Naive thymus-derived CD4-positive, alpha-beta T cell (primary cell): ENCODE measurements at regions of chr2 and their contacts with region 1.

Region 1: DNA sequence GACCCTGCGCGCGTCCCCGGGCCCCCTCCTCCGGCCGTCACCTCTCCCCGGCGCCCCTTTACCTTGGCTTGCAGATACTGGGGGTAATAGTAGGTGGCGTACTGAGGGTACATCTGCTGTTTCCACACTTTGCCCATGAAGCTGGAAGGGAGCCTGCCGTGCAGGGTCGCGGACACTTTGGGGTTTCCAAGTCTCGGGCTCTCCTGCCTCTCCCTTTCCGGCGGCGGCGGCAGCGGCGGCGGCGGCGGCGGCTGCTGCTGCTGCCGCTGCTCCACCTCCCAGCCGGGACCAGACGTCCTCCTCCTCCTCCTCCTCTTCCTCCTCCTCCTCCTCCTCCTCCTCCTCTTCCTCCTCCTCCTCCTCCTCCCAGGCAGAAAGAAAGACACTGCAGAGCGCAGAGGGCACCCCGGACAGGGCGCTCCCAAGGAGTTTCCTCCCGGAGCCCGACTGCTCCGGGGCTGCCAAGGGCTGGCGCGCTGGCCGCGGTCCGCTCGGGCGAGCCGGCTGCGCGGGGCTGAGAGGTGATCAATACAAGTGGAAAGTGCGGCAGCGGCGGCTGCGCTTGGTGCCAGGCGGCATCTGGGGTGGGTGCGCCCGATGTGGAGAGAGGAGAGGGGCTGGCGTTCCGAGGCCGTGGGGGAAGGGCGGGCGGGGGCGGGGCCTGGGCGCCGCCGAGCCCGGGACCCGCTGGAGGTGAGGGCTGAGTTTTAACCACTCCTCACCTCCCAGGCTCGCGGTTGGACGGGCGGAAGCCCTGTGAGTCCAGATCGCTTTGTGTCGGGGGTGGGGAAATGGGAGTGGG is at the start of gene RBMS1:
- DNase-seq: peak; percentile 36 to 63 (median 57)
- ATAC-seq: peak; percentile 55
- H3K4me3 ChIP-seq: peak within 1 kb of the TSS; percentile 64
- H3K4me3 Mint-ChIP-seq: peak within 1 kb of the TSS; percentile 87 to 98 (median 96)
- H3K27ac ChIP-seq: peak within 1 kb of the TSS; percentile 96
- H3K27ac Mint-ChIP-seq: peak within 1 kb of the TSS; percentile 91 to 98 (median 97)
- H3K4me1 ChIP-seq: peaks cover 3 to 10% of the 10 kb centered on the region in 2 donors
- H3K4me1 Mint-ChIP-seq: peaks cover 17 to 56% (median 47%) of the 10 kb centered on the region in 7 donors
- H3K27me3 ChIP-seq: no peaks in the 10 kb centered on the region
- H3K27me3 Mint-ChIP-seq: peaks cover 0 to 12% (median 0%) of the 10 kb centered on the region in 5 donors
- total RNA-seq, gene RBMS1: 74.4 to 123 (median 101) TPM

Region 2: DNA sequence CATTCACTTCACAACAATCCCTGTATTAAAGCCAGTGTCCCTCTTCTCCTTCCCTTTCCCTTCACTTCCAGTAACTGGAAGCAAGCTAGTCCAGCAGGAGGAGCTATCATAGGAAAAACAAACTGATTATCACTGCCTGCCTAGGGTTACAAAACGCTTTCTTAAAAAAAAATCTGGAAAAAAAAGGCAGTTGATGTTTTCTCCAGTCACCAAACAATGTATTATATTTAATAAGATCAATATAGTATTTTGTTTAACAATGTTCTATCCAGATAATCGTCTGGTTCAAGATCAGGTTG is 214.6 kb before region 1 on chr2:
- CTCF ChIA-PET with region 1: no interaction called
- POLR2A ChIA-PET with region 1: no interaction called
- intact Hi-C with region 1: loop called (anchors 5 kb)
- DNase-seq: no peak
- ATAC-seq: no peak
- H3K4me3 ChIP-seq: no peak overlapping the region
- H3K4me3 Mint-ChIP-seq: no peak overlapping the region
- H3K27ac ChIP-seq: no peak overlapping the region
- H3K27ac Mint-ChIP-seq: peak overlapping the region in 5 of 9 donors; percentile 44 to 86 (median 66)
- H3K4me1 ChIP-seq: peaks cover 4 to 10% of the 10 kb centered on the region in 2 donors
- H3K4me1 Mint-ChIP-seq: peaks cover 14 to 37% (median 29%) of the 10 kb centered on the region in 7 donors
- H3K27me3 ChIP-seq: no peaks in the 10 kb centered on the region
- H3K27me3 Mint-ChIP-seq: no peaks in the 10 kb centered on the region

Region 3: DNA sequence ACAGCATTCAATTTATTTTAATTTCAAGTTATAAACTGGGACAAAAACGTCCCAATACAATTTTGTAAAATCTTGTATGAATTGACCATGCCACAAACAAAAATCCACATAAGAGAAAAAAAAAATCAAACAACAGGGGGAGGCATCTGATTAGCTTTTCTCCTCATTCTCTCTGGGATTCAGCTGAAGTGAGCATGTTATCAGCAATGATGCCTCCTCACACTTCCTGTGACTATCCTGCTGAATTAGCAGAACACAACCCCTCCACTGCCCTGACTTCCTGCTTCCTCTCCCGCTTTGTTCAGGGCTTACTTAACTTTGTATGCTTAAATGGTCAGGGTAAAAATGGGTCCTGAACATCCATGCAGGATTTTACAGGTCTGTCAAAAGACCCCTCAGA is 161.1 kb before region 1 on chr2:
- CTCF ChIA-PET with region 1: no interaction called
- POLR2A ChIA-PET with region 1: no interaction called
- intact Hi-C with region 1: loop called in 1 of 2 experiments (anchors 2 kb)
- DNase-seq: peak in 4 of 9 donors; percentile 8 to 26 (median 16)
- ATAC-seq: peak; percentile 66
- H3K4me3 ChIP-seq: no peak overlapping the region
- H3K4me3 Mint-ChIP-seq: peak overlapping the region in 9 of 10 donors; percentile 29 to 69 (median 52)
- H3K27ac ChIP-seq: no peak overlapping the region
- H3K27ac Mint-ChIP-seq: peak overlapping the region in 8 of 9 donors; percentile 0 to 90 (median 60)
- H3K4me1 ChIP-seq: peaks cover 39 to 57% of the 10 kb centered on the region in 2 donors
- H3K4me1 Mint-ChIP-seq: peaks cover 68 to 98% (median 96%) of the 10 kb centered on the region in 7 donors
- H3K27me3 ChIP-seq: no peaks in the 10 kb centered on the region
- H3K27me3 Mint-ChIP-seq: no peaks in the 10 kb centered on the region

Region 4: DNA sequence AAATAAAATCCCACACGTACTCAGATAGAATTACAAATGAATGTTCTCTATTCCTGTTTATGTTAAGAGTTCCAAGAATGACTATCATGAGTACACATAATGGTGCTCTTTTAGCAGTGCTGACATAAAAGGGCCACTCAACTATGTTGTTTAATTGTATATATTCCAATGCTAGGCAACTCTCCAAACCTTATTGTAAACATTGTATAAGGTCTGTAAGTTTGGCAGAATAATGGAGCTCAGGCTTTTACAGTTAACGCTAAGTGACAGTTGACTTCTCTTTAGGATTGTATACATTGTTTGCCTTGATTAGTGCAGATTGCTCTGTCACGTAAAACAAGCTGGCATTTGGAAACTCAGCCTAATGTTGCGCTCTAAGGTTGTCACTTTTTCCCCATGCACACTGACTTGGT is 20.6 kb before region 1 on chr2:
- CTCF ChIA-PET with region 1: no interaction called
- POLR2A ChIA-PET with region 1: interaction called, 5 read pairs
- intact Hi-C with region 1: loop called (anchors 1 kb)
- DNase-seq: peak in 1 of 9 donors; percentile 19
- ATAC-seq: no peak
- H3K4me3 ChIP-seq: no peak overlapping the region
- H3K4me3 Mint-ChIP-seq: peak overlapping the region in 9 of 10 donors; percentile 40 to 77 (median 64)
- H3K27ac ChIP-seq: peak overlapping the region; percentile 70
- H3K27ac Mint-ChIP-seq: peak overlapping the region; percentile 78 to 98 (median 90)
- H3K4me1 ChIP-seq: peaks cover 0 to 56% of the 10 kb centered on the region in 2 donors
- H3K4me1 Mint-ChIP-seq: peaks cover 22 to 96% (median 88%) of the 10 kb centered on the region in 7 donors
- H3K27me3 ChIP-seq: no peaks in the 10 kb centered on the region
- H3K27me3 Mint-ChIP-seq: no peaks in the 10 kb centered on the region

Region 5: DNA sequence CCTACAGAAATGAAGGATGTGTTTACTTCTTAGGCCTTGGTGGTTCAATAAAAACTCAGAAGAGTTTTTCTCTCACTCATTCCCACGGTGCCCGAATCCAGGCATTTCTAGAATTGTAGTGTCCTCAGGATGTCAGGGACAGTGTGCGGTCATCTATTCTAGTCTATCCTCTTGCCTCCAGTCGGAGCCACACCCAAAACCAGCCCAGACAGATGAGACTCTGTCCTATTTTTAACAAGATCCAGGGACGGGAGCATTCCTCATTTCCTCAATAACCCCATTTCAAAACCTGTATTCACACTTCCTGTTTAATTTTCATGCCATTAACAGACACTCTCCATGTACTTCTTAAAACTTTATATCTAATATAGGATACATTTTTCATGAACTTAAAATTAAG is 11.8 kb after region 1 on chr2:
- CTCF ChIA-PET with region 1: no interaction called
- POLR2A ChIA-PET with region 1: interaction called, 7 read pairs
- intact Hi-C with region 1: loop called (anchors 1 kb)
- DNase-seq: no peak
- ATAC-seq: no peak
- H3K4me3 ChIP-seq: no peak overlapping the region
- H3K4me3 Mint-ChIP-seq: no peak overlapping the region
- H3K27ac ChIP-seq: no peak overlapping the region
- H3K27ac Mint-ChIP-seq: peak overlapping the region in 1 of 9 donors; percentile 26
- H3K4me1 ChIP-seq: peaks cover 12% of the 10 kb centered on the region in 2 donors
- H3K4me1 Mint-ChIP-seq: peaks cover 9 to 42% (median 25%) of the 10 kb centered on the region in 7 donors
- H3K27me3 ChIP-seq: no peaks in the 10 kb centered on the region
- H3K27me3 Mint-ChIP-seq: no peaks in the 10 kb centered on the region

Region 6: DNA sequence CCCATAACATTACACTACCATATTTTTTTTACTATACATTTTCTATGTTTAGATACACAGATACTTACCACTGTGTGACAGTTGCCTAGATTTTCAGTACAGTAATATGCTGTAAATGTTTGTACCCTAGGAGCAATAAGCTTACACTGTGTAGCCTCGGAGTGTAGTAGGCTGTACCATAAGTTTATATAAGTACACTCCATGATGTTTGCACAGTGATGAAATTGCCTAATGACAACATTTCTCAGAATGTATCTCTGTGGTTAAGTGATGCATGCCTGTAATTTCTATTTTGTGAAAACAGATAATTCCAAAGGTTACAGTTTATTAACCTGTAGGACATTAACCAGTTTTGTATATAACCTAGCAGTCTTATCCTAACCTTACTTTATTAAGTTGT is 128.3 kb after region 1 on chr2:
- CTCF ChIA-PET with region 1: no interaction called
- POLR2A ChIA-PET with region 1: no interaction called
- intact Hi-C with region 1: no loop called
- DNase-seq: no peak
- ATAC-seq: no peak
- H3K4me3 ChIP-seq: no peak overlapping the region
- H3K4me3 Mint-ChIP-seq: no peak overlapping the region
- H3K27ac ChIP-seq: no peak overlapping the region
- H3K27ac Mint-ChIP-seq: no peak overlapping the region
- H3K4me1 ChIP-seq: no peaks in the 10 kb centered on the region
- H3K4me1 Mint-ChIP-seq: no peaks in the 10 kb centered on the region
- H3K27me3 ChIP-seq: no peaks in the 10 kb centered on the region
- H3K27me3 Mint-ChIP-seq: peaks cover 0 to 1% (median 0%) of the 10 kb centered on the region in 5 donors

Region 7: DNA sequence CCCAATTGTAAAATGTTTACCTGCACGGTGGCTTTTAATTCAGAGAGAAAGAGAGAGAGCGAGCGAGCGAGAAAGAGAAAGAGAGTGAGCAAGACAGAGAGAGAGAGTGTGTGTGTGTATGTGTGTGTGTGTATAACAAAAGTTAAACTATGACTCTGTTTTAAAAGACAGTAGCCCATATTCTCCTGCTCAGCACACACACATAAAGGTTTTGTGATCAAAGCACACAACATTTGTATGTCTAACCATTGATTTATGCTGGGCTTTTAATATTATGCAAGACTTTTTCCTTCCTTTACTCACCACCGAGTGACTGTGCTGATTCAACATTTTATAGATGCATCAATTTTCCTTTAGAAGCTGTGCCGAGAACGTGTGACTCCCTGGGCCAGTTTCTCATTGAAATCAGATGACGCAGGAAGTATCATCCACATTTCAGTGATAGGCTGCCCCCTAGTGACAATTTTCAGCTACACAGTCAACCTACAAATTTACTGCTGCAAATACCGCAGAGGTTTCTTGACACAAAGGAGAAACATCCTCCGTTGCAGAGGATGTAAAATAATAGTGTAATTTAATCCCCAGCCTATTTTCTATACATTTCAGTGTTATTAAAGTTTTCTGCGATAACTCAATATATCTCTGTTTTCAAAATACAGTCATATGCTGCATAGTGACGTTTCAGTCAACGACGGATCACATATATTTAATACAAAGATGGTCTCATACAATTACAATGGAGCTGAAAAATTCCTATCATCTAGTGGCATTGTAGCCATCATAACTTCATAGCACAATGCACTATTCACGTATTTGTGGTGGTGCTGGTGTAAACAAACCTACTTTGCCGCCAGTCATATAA is 500.9 kb after region 1 on chr2:
- CTCF ChIA-PET with region 1: no interaction called
- POLR2A ChIA-PET with region 1: no interaction called
- intact Hi-C with region 1: loop called in 1 of 2 experiments (anchors 10 kb)
- DNase-seq: peak; percentile 11 to 86 (median 80)
- ATAC-seq: peak; percentile 95
- H3K4me3 ChIP-seq: no peak overlapping the region
- H3K4me3 Mint-ChIP-seq: peak overlapping the region in 9 of 10 donors; percentile 4 to 76 (median 55)
- H3K27ac ChIP-seq: no peak overlapping the region
- H3K27ac Mint-ChIP-seq: peak overlapping the region in 7 of 9 donors; percentile 0 to 84 (median 26)
- H3K4me1 ChIP-seq: no peaks in the 10 kb centered on the region
- H3K4me1 Mint-ChIP-seq: peaks cover 5 to 13% (median 11%) of the 10 kb centered on the region in 7 donors
- H3K27me3 ChIP-seq: no peaks in the 10 kb centered on the region
- H3K27me3 Mint-ChIP-seq: peaks cover 0 to 13% (median 0%) of the 10 kb centered on the region in 5 donors

Region 8: DNA sequence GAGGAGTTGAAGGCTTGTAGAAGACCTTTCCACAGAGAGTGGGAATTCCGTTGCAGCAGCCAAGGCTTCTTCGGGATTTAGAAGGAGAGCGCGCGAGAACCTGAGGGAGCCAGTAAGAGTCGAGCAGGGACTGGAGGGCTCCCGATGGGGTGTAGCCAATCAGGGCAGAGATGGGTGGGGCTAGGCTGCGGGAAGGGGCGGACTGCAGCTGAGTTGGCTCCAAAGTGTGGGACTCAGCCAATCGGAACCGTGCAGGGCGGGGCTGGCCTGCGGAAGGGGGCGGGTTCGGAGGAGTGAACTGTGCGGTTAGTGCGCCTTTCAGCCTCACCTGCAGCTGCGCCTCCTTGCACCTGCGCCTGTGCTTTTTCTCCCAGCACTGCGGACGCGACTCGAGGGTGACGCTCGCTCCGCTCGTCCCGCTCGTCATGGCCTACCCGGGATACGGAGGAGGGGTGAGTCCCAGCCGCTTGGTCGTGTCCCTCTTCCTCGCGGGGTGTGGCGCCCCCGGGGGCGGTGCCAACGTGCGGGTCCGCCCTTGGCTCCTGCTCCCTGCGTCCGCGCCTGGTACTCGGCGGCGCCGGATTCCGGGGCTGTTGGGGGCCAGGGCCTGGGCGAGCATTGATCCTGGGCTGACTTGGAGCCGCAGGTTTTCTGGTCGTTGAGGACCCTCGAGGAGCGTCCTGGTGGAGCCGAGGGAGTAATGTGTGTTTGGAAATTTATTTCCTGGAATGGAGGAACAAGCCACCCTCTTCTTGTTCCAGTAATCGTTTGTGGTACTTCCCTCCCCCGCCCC is 1850.6 kb after region 1 on chr2 and contains the start of gene GCA:
- CTCF ChIA-PET with region 1: no interaction called
- POLR2A ChIA-PET with region 1: no interaction called
- intact Hi-C with region 1: loop called in 1 of 2 experiments (anchors 10 kb)
- DNase-seq: peak; percentile 96 to 99 (median 98)
- ATAC-seq: peak; percentile 99
- H3K4me3 ChIP-seq: peak within 1 kb of the TSS; percentile 87
- H3K4me3 Mint-ChIP-seq: peak within 1 kb of the TSS; percentile 78 to 96 (median 91)
- H3K27ac ChIP-seq: peak within 1 kb of the TSS; percentile 53
- H3K27ac Mint-ChIP-seq: peak within 1 kb of the TSS; percentile 70 to 92 (median 81)
- H3K4me1 ChIP-seq: peaks cover 4 to 5% of the 10 kb centered on the region in 2 donors
- H3K4me1 Mint-ChIP-seq: peaks cover 0 to 21% (median 19%) of the 10 kb centered on the region in 7 donors
- H3K27me3 ChIP-seq: no peaks in the 10 kb centered on the region
- H3K27me3 Mint-ChIP-seq: peaks cover 0 to 9% (median 0%) of the 10 kb centered on the region in 5 donors
- total RNA-seq, gene GCA: 10.9 to 56.3 (median 13.4) TPM